SK-N-SH (cell line): ENCODE measurements at regions of chr16 and their contacts with region 1.

Region 1: DNA sequence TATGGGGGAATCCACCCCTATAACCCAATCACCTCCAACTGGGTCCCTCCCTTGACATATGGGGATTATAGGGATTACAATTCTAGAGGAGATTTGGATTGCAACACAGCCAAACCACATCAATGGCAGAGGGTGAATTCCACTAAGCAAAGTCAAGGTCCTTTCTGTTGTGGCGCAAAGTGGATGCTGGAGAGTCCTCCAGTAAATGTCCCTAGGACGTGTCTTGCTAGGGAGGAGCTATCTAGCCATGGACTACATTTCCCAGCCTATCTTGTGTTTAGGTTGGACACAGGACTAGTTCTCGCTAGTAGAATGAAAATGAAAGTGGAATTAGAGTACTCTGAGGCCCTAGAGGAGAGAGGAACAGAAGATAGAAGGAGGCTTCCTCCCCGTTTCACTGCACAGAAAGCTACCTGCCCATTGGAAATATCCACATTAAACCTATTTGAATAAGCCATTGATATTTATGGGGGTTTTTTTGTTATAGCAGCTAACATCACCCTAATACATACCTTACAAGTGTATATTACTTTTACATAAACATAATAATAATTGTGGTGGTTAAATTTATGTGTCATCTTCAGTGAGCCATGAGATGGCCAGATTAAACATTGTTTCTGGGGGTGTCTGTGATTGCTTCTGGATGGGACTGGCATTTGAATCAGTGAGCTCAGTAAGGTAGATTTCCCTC is 56.7 kb upstream of the ERCC4 start:
- DNase-seq: no peak
- H3K4me3 ChIP-seq: no peak overlapping the region
- H3K27ac ChIP-seq: no peak overlapping the region
- H3K4me1 ChIP-seq: no peaks in the 10 kb centered on the region
- H3K27me3 ChIP-seq: no peaks in the 10 kb centered on the region
- CTCF ChIP-seq: no peak
- EP300 ChIP-seq: no peak
- RAD21 ChIP-seq: no peak

Region 2: DNA sequence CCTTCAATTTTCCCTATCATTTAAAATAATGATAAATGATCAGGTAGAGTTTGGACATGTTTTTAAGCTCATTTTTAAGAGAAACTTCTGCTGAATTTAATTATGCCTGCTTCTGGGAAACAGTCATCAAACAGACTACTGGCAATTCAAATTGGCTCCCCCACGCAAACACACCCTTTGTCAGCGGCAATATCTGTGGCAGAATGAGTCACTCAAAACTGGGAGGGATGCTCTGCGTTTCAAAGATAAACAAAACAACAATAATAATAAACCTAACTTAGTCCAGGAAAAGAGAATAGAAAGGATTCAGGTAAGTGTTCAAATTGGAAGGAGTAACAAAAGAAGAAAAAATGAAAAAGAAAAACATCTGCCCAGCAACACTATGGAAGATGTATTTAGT is 51.4 kb before region 1 on chr16:
- CTCF ChIA-PET with region 1: no interaction called
- POLR2A ChIA-PET with region 1: no interaction called
- DNase-seq: no peak
- H3K4me3 ChIP-seq: no peak overlapping the region
- H3K27ac ChIP-seq: no peak overlapping the region
- H3K4me1 ChIP-seq: no peaks in the 10 kb centered on the region
- H3K27me3 ChIP-seq: no peaks in the 10 kb centered on the region
- CTCF ChIP-seq: no peak
- EP300 ChIP-seq: no peak
- RAD21 ChIP-seq: no peak

Region 3: DNA sequence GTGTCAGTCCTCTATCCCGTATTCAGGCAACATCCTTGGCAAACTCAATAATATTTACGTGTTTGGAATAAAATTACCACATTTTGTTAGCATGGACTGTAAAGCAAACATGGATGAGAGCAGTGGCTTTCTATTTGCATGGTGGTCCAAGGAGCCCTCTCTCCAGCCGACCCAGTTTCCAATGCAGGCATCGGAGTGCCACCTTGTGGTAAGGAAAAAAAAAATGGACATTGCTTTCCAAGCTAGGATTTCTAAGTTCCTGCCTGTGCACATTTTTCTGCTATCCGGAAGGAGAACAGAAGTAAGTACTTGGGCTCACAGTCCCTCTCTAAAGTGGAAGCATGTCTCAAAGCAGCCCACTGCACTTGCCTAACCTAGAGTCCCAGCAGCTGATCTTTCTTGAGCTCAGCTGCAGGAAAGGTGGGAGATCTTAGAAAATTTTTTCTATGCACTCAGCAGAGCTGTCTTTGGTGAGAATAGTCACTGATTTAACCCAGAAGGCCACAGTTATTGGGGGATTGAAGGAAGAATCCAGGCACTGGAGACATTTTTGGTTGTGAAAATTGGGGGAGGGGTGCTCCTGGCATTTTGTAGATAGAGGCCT is 10.7 kb after region 1 on chr16:
- CTCF ChIA-PET with region 1: interaction called, 17 read pairs
- POLR2A ChIA-PET with region 1: no interaction called
- DNase-seq: peak; percentile 41
- H3K4me3 ChIP-seq: peak overlapping the region in 1 of 2 experiments; percentile 26; a peak in 1 of 4 replicates
- H3K27ac ChIP-seq: no peak overlapping the region
- H3K4me1 ChIP-seq: no peaks in the 10 kb centered on the region
- H3K27me3 ChIP-seq: no peaks in the 10 kb centered on the region; the same call in 1 of the 2 replicates
- CTCF ChIP-seq: peak; percentile 58
- EP300 ChIP-seq: no peak
- RAD21 ChIP-seq: peak; percentile 70